Right cardiac atrium (tissue), 5 donors: ENCODE measurements at regions of chr2 and their contacts with region 1.

Region 1: GRCh38 chr2:205680067-205680466 is 2.2 kb upstream of the NRP2 start:
- DNase-seq: peak in 1 of 3 donors; percentile 60
- ATAC-seq: peak; percentile 14 to 36
- H3K4me3 ChIP-seq: no peak overlapping the region
- H3K27ac ChIP-seq: no peak overlapping the region
- H3K4me1 ChIP-seq: no peaks in the 10 kb centered on the region
- H3K27me3 ChIP-seq: no peaks in the 10 kb centered on the region

Region 2: DNA sequence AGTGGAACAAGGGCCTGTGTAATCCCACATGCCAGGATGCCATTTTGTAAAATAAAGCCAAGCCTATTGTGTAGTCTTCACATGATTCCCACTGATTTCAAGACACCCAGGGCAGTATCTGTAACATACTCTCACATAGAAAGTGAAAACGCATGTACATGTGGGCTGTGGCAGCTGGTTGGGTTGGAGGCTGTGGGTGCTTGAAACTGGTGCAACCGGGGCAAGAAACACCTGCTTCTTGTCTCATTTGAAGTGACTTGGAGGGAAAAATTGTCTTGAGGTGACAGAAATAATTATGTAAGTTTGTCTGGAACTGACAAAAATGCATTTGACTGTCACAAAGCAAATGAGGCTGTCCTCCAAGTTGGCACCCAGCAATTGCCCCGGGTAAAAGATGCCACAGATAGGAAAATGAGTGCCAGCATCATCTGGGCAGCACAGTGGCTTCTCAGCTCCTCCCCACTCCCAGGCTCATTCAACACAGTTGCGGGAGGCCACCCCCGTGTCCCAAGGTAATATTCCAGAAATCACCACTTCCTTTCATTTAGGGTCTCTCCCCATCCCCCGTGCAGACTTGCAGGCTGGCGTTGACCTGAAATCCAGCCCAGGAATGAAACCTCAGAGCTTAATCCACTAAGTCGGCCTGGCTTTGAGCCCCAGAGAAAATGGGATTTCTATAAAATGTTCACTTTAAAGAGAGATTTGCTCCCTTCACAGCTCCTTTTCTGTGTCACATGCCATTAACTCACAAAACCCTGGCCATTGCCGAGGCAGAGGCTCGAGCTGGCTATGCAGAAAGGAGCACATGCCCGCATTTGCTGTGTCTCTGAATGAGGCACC is 1428.7 kb before region 1 on chr2:
- intact Hi-C with region 1: loop called in 1 of 4 experiments (anchors 10 kb)
- DNase-seq: no peak
- ATAC-seq: no peak
- H3K4me3 ChIP-seq: no peak overlapping the region
- H3K27ac ChIP-seq: no peak overlapping the region
- H3K4me1 ChIP-seq: peaks cover 3% of the 10 kb centered on the region
- H3K27me3 ChIP-seq: no peaks in the 10 kb centered on the region

Region 3: GRCh38 chr2:204325468-204325867 is 1354.6 kb before region 1 on chr2:
- intact Hi-C with region 1: loop called in 2 of 4 experiments (anchors 10 kb)
- DNase-seq: peak in 2 of 3 donors; percentile 51 to 55
- ATAC-seq: peak; percentile 70 to 84
- H3K4me3 ChIP-seq: no peak overlapping the region
- H3K27ac ChIP-seq: no peak overlapping the region
- H3K4me1 ChIP-seq: no peaks in the 10 kb centered on the region
- H3K27me3 ChIP-seq: no peaks in the 10 kb centered on the region

Region 4: DNA sequence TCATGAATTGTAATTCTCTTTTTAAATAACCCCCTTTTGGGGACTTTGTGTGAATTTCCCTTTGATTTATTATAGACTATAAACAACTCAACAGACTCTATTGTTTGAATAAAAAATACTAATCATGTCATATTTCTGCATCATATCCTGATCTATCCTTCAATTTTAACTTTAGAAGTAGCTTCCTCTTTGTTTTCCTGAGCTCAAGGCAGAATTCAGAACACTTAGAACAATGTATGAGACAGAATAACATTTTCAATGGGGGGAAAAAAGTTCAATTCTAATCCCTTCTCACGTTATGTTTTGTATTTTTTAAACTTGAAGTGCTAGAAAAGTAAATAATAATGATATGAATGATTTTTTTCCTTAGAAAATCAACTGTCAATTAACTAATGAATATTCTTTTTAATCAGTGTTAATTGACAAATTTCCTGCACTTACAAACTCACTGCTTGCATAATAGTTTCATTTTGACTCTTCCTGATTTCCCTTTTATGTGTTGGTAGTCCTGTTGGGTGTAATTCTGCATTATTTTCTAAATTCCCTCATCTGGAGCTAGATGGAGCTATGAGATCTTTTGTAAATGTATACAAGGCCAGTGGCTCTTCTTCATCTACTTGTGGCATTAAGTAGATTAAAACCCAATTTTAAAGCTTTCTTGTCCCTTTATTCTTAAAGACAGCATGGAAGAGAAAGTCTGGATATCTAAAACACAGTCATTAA is 808.7 kb before region 1 on chr2:
- intact Hi-C with region 1: loop called in 1 of 4 experiments (anchors 10 kb)
- DNase-seq: no peak
- ATAC-seq: peak in 1 of 2 donors; percentile 65
- H3K4me3 ChIP-seq: no peak overlapping the region
- H3K27ac ChIP-seq: no peak overlapping the region
- H3K4me1 ChIP-seq: peaks cover 2% of the 10 kb centered on the region
- H3K27me3 ChIP-seq: no peaks in the 10 kb centered on the region